Colonic mucosa (tissue), 4 donors: ENCODE measurements at regions of chr9 and their contacts with region 1.

Region 1: DNA sequence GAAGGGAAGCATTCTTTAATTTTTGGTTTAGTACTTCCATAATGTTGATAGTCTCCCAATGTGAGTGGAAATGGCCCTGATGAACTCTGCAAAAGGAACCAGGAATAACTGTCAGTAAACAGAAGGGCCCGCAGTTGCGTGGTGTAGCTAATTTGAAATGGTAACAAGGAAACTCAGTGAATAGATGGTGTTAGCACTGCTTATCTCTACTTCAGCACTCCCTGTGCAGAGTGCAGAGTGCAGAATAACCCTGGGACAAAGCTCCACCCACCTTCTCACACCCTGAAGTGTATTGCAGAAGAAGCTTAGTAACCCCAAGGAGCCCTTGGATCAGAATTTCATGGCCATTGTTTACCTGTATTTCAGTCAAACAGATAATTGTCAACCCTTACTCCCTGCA is 158.9 kb downstream of the PCSK5 start:
- DNase-seq: peak; percentile 86
- H3K4me3 ChIP-seq: no peak overlapping the region
- H3K27ac ChIP-seq: peak overlapping the region; percentile 59
- H3K4me1 ChIP-seq: peaks cover 10% of the 10 kb centered on the region
- H3K27me3 ChIP-seq: no peaks in the 10 kb centered on the region
- CTCF ChIP-seq: no peak

Region 2: DNA sequence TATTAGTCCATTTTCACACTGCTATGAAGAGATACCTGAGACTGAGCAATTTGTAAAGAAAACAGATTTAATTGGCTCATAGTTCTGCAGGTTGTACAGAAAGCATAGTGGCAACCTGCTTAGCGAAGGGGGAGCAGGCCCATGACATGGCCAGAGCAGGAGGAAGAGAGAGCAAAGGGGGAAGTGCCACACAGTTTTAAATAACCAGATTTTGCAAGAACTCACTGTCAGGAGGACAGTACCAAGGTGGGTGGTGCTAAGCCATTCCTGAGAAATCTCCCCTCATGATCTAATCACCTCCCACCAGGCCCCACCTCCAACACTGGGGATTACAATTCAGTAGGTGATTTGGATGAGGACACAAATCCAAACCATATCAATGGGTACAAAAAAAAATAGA is 175.6 kb before region 1 on chr9:
- intact Hi-C with region 1: loop called (anchors 10 kb)
- DNase-seq: no peak
- H3K4me3 ChIP-seq: no peak overlapping the region
- H3K27ac ChIP-seq: no peak overlapping the region
- H3K4me1 ChIP-seq: no peaks in the 10 kb centered on the region
- H3K27me3 ChIP-seq: no peaks in the 10 kb centered on the region
- CTCF ChIP-seq: no peak